A549 (cell line): ENCODE measurements at regions of chr11 and their contacts with region 1.

Region 1: DNA sequence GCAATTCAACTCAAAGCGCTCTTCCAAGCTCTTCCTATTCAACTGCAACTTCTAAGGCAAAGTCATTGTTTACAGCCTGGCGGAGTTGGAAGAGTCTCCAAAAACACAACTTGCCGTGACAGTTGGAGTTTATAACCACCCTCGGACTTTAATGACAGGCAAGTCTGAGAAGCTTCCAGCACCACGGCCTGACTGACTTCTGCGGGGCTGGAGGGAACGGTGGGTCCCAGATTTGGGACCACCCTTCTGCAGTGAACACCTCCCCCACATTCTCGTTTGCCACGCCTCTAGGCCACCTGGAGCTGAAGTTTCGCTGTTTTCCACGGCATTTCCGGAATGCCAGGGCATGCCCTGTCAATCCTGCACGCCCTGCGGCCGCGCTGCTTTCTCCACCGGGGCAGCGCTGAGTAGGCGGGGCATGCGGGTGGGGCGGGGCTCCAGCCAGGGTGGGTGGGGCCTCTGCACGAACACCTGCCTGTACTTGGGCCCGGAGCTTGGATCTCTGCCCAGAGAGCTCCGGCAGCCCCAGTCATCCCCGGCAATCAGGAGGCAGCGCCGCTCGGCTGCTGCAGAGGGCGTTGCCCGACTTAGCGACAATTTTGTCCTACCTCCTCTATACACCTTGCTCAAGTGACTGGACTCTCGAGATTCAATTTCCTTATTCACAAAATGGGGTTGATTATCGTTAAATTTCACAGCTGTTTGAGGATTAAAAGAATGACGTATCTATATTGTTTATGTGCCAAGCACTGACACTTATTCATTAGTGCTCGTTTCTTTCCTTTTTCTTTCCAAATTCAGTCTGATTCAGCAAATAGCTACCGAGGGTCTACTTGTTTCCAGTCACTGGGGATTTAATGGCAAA is 48.7 kb upstream of the BIRC3 start:
- DNase-seq: peak; percentile 88 to 92
- ATAC-seq: peak; percentile 97 to 98
- H3K4me3 ChIP-seq: peak overlapping the region; percentile 51
- H3K27ac ChIP-seq: peak overlapping the region; percentile 48 to 85
- H3K4me1 ChIP-seq: peaks cover 16% of the 10 kb centered on the region
- CTCF ChIP-seq: peak; percentile 46
- EP300 ChIP-seq: no peak
- POLR2A ChIP-seq: no peak; the same call in 1 of the 2 replicates
- RAD21 ChIP-seq: peak; percentile 41 to 63; a peak in 4 of 5 replicates

Region 2: GRCh38 chr11:102254045-102254444 is 14.5 kb before region 1 on chr11:
- CTCF ChIA-PET with region 1: interaction called, 33 read pairs
- POLR2A ChIA-PET with region 1: no interaction called
- DNase-seq: peak; percentile 21 to 36
- ATAC-seq: peak in 1 of 2 experiments; percentile 50; a peak in 2 of 6 replicates
- H3K4me3 ChIP-seq: no peak overlapping the region
- H3K27ac ChIP-seq: no peak overlapping the region
- H3K4me1 ChIP-seq: no peaks in the 10 kb centered on the region
- CTCF ChIP-seq: no peak; the same call in 2 of the 3 replicates
- EP300 ChIP-seq: no peak
- POLR2A ChIP-seq: no peak
- RAD21 ChIP-seq: 0 out of 5 replicates have a peak, but pooled peaks of 1 of the 2 experiments have one; percentile 6

Region 3: DNA sequence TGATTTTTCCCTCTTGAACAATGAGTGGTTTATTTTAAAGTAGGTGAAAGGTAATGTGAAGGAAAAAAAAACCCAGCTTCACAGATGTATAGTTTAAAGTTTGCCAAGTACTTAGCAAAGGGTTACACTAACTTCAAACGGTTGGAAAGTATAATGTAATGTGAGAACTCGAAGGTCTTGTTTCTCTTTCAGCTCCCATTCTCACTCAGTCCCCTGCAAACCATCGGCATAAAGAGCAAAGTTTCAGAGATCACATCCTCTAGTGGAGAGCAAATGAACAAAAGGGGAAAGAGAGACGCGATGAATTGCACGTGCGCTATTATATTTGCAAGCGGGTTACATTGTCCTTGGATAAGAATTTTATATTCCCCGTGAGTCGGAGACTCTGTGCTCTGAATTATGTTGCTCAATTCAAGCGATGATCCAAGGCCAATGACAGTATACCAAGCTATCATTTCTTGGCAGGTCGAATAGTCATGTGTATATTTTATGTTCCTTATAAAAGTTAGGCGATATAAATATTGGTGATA is 11.1 kb after region 1 on chr11:
- CTCF ChIA-PET with region 1: interaction called, 10 read pairs
- POLR2A ChIA-PET with region 1: no interaction called
- DNase-seq: peak in 1 of 2 experiments; percentile 9
- ATAC-seq: peak; percentile 68 to 76; a peak in 5 of 6 replicates
- H3K4me3 ChIP-seq: 0 out of 3 replicates have a peak overlapping the region, but pooled peaks have one; percentile 15
- H3K27ac ChIP-seq: peak overlapping the region; percentile 23 to 67; a peak in 3 of 6 replicates
- H3K4me1 ChIP-seq: peaks cover 12% of the 10 kb centered on the region; the same call in 1 of the 3 replicates
- CTCF ChIP-seq: no peak
- EP300 ChIP-seq: no peak
- POLR2A ChIP-seq: no peak
- RAD21 ChIP-seq: no peak; a peak in 3 of 5 replicates

Region 4: DNA sequence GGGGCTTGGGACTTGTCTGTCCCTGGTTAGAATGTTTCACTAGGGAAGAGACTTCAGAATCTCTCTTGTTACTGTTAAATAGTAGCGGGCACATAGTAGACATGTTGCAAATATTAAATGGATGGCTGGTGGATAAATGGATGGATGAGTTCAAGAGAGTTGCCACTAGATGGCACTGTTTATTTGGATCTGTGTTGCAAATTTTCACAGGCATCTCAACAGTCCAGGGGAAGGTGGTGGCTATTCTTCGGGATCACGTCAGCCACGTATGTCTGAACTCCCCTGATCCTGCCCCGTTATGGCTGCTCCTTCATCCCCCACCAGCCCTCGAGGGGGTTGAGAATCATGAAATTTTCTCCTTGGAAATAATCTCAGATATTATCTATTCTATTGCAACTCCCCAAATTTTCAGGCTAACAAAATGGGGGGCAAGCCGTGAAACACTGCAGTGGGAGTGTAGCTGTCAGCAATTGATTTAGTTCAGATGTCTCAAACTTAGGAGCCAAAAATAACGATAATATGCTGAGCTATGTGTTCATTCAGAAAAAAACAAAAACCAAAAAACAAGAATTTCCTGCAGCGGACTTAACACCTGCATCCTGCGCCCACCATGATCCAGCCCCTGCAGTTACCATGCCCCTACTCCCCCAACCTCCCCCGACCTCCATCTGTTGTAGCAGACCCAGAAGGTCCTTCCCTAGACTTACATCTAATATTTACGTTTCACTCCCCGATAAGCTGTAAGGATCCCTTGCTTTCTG is 19.6 kb after region 1 on chr11:
- CTCF ChIA-PET with region 1: interaction called, 15 read pairs
- POLR2A ChIA-PET with region 1: no interaction called
- DNase-seq: peak; percentile 66 to 80
- ATAC-seq: peak; percentile 89 to 95
- H3K4me3 ChIP-seq: no peak overlapping the region; the same call in 2 of the 3 replicates
- H3K27ac ChIP-seq: peak overlapping the region; percentile 57 to 72; a peak in 5 of 6 replicates
- H3K4me1 ChIP-seq: peaks cover 28% of the 10 kb centered on the region; the same call in 2 of the 3 replicates
- CTCF ChIP-seq: peak; percentile 70
- EP300 ChIP-seq: no peak
- POLR2A ChIP-seq: no peak
- RAD21 ChIP-seq: peak; percentile 76 to 83